Activated naive CD4-positive, alpha-beta T cell treated with anti-CD3 and anti-CD28 coated beads for 36 hours (primary cell): ENCODE measurements at regions of chr2 and their contacts with region 1.

Region 1: GRCh38 chr2:118855451-118856279 is 8.2 kb upstream of the EN1 start:
- DNase-seq: peak; percentile 86
- H3K4me3 Mint-ChIP-seq: peak overlapping the region; percentile 55
- H3K27ac Mint-ChIP-seq: no peak overlapping the region
- H3K4me1 Mint-ChIP-seq: peaks cover 33% of the 10 kb centered on the region
- H3K27me3 Mint-ChIP-seq: peaks cover 71% of the 10 kb centered on the region

Region 2: GRCh38 chr2:118046634-118047210 is 808.9 kb before region 1 on chr2:
- CTCF ChIA-PET with region 1: interaction called, 4 read pairs
- intact Hi-C with region 1: loop called (anchors 1 kb)
- DNase-seq: no peak
- H3K4me3 Mint-ChIP-seq: no peak overlapping the region
- H3K27ac Mint-ChIP-seq: no peak overlapping the region
- H3K4me1 Mint-ChIP-seq: peaks cover 2% of the 10 kb centered on the region
- H3K27me3 Mint-ChIP-seq: peaks cover 45% of the 10 kb centered on the region

Region 3: GRCh38 chr2:118221666-118222594 is 633.7 kb before region 1 on chr2:
- CTCF ChIA-PET with region 1: interaction called, 24 read pairs
- intact Hi-C with region 1: loop called (anchors 1 kb)
- DNase-seq: peak; percentile 56
- H3K4me3 Mint-ChIP-seq: no peak overlapping the region
- H3K27ac Mint-ChIP-seq: no peak overlapping the region
- H3K4me1 Mint-ChIP-seq: peaks cover 12% of the 10 kb centered on the region
- H3K27me3 Mint-ChIP-seq: peaks cover 57% of the 10 kb centered on the region

Region 4: GRCh38 chr2:118371515-118371914 is 484.1 kb before region 1 on chr2:
- CTCF ChIA-PET with region 1: no interaction called
- intact Hi-C with region 1: loop called (anchors 2 kb)
- DNase-seq: peak; percentile 10
- H3K4me3 Mint-ChIP-seq: no peak overlapping the region
- H3K27ac Mint-ChIP-seq: no peak overlapping the region
- H3K4me1 Mint-ChIP-seq: no peaks in the 10 kb centered on the region
- H3K27me3 Mint-ChIP-seq: peaks cover 25% of the 10 kb centered on the region

Region 5: GRCh38 chr2:118492335-118492734 is 363.3 kb before region 1 on chr2:
- CTCF ChIA-PET with region 1: interaction called, 3 read pairs
- intact Hi-C with region 1: loop called (anchors 1 kb)
- DNase-seq: no peak
- H3K4me3 Mint-ChIP-seq: no peak overlapping the region
- H3K27ac Mint-ChIP-seq: no peak overlapping the region
- H3K4me1 Mint-ChIP-seq: no peaks in the 10 kb centered on the region
- H3K27me3 Mint-ChIP-seq: peaks cover 17% of the 10 kb centered on the region

Region 6: DNA sequence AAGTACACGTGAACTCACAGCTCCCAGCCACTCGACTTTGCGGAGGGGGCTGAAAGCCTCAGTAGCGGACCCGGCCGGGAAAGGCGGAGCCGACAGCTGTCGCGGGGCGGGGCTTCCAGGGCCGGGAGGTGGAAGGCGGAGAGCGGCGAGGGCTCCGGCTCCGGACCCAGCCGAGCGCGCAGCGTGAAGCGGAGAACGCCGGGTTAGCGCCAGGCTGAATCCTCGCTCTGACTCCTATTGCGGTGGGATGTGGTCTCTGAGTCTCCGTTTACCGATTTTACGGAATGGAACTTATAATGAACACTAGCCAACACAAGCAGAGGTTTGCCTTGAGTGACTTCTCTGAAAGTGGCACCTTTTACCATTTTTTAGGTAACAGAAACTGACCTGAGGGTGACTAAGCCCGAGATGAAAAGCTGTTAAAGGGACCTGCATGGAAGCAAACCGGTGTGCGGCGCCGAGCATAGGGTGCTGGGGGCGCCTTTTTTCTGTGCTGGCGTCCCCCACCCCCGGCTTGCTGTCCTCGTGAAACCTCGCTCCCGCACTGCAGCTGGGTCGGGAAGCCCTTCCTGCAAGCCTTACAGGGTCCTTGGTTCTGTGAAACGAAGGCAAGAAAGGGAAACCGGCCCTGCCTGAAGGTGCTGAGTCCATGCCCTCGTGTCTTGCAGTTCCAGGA is 81.1 kb before region 1 on chr2:
- CTCF ChIA-PET with region 1: interaction called, 4 read pairs
- intact Hi-C with region 1: loop called (anchors 5 kb)
- DNase-seq: peak; percentile 28
- H3K4me3 Mint-ChIP-seq: no peak overlapping the region
- H3K27ac Mint-ChIP-seq: no peak overlapping the region
- H3K4me1 Mint-ChIP-seq: peaks cover 7% of the 10 kb centered on the region
- H3K27me3 Mint-ChIP-seq: peaks cover 56% of the 10 kb centered on the region